ENCODE measurements at regions of chr9 and their contacts with region 1.

Region 1: DNA sequence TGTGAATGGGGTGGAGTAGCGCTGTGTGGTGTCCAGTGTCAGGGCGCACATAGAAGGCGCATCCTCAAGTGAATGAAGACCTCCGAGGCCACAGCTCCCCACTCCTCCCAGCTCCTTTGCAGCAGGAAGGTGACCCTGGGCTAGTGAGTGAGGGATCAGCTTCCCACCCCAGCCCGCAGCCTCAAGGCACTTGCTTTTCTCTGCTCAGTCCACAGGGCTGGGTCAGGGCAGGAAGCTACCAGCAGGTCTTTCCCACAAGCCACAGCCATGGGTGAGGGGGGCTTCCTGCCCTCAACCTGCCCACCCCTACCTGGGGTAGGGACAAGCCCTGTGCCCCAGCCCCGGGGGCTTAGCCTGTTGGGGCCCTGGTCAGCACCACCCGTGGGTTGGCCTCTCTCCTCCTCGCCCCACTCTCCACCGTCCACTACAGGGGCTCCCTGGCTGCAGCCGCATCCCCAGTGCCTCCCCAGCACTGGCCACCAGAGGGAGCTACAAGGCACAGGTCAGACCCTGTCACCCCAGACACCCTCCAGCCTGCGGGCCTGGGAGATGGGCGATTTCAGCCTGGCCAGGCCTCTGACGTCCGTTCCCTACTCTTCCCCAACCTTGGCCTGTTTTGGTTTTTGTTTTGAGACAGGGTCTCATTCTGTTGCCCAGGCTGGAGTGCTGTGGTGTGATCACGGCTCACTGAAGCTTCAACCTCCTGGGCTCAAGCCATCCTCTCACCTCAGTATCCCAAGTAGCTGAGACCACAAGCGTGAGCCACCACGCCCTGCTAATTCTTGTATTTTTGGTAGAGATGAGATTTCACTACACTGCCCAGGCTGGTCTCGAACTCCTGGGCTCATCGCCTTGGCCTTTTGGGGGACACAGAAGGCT is 1.3 kb upstream of the ABCA2 start:
- DNase-seq: peak; percentile 70
- H3K4me3 Mint-ChIP-seq: peak overlapping the region; percentile 67
- H3K27ac Mint-ChIP-seq: no peak overlapping the region
- H3K4me1 Mint-ChIP-seq: peaks cover 8% of the 10 kb centered on the region
- H3K27me3 Mint-ChIP-seq: no peaks in the 10 kb centered on the region
- CTCF ChIP-seq: peak; percentile 85

Region 2: DNA sequence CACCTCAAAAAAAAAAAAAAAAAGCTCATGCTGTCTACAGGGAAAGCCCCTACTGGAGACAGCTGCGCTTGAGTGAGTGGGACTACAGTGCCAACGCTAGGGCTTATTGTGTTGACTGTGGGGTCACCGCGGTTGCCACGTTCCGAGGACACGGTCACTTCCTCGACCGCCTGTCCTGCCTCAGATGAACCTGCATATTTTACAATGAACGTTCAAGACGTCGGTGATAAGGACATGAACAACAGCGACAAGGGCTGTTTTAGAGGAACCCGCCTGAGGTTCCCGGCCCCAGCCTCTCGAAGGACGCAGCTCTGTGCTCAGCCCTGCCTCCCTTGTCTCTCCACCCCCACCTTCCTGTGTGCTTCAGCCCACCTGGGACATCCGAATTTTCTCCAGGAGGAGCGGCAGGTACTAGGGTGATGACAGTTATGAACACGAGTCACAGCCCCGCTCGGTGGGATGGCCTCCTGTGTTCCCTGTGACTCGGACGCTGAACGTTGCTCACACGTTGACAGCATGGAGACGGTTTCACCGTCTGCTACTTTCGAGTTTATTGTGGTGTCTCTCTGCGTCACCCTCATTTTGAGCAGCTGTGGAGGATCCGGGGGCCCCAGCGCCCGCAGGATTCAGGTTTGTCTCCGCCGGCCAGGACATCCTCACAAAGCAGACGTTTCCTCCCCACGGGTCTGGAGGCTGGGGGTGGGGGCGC is 328.2 kb before region 1 on chr9:
- CTCF ChIA-PET with region 1: no interaction called
- POLR2A ChIA-PET with region 1: no interaction called
- intact Hi-C with region 1: no loop called
- DNase-seq: no peak
- H3K4me3 Mint-ChIP-seq: no peak overlapping the region
- H3K27ac Mint-ChIP-seq: no peak overlapping the region
- H3K4me1 Mint-ChIP-seq: peaks cover 11% of the 10 kb centered on the region
- H3K27me3 Mint-ChIP-seq: no peaks in the 10 kb centered on the region
- CTCF ChIP-seq: no peak

Region 3: DNA sequence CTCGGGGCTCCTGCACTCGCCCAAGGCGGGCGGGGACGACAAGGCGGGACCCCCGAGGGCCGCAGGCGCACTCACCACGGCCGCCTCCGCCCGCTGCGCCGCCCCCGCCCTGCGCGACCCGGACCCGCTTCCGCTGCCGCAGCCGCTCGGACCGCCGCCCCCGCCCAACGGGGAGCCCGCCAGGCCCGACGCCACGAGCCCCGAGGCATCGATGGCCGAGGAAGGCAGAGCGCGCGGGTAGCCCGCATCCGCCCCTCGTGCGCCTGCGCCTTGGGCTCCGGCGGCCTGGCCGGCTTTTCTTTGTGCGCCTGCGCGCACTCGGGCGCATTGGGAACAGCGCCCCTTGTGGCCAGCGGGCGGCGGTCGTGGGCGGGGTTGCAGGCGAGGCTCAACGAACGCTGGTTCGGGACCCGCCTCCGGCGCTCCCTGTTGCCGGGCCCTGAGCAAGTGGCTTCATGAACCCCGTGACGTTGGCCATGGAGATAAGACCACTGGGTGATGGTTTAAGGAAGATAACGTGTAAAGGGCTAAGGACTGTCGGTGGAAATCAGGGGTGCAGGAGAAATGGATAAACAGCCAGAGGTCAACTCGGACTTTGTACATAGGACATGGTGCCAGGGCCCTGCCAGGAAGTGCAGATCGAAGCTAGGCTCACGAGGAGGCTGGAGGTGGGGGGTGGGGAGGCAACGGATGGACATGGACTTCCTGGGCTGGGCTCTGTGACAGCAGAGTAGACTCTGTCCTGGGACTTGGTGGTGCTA is 84.6 kb before region 1 on chr9 and contains the starts of genes C8G and FBXW5:
- CTCF ChIA-PET with region 1: interaction called, 25 read pairs
- POLR2A ChIA-PET with region 1: interaction called, 3 read pairs
- intact Hi-C with region 1: no loop called
- DNase-seq: peak; percentile 93
- H3K4me3 Mint-ChIP-seq: peak within 1 kb of the TSS; percentile 70
- H3K27ac Mint-ChIP-seq: peak within 1 kb of the TSS; percentile 69
- H3K4me1 Mint-ChIP-seq: no peaks in the 10 kb centered on the region
- H3K27me3 Mint-ChIP-seq: no peaks in the 10 kb centered on the region
- CTCF ChIP-seq: peak; percentile 91
- total RNA-seq, gene C8G: 1.0 and 1.1 TPM in 2 replicates
- total RNA-seq, gene FBXW5: 88.8 and 100 TPM in 2 replicates

Region 4: DNA sequence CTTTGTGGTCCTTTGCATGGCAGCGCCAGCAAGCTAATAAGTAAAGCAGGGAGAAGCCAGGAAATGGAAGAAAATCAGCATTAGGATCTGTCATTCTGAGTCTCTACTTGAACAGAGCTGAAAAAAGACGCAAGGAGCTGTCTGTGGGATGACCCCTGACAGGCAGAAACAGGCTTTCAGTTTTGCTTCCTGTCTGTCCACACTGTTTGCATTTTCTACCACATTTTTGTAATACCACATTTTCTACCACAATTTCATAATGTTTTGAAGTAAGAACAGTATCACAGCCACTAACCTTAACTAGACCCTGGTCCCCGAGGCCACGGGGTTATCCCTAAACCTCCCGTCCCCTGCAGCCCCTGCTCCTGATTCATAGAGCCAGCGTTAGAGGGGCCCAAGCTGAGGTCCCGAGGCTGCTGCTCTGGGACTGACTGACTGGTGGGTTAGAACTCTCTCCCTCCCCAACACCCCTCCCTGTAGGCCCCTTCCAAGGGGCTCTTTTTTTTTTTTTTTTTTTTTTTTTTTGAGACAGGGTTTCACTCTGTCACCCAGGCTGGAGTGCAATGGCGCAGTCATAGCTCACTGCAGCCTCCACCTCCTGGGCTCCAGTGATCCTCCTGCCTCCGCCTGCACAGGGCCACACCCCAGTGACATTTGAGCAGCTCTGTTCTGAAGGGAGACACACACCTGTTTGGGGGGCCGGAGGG is 29.0 kb before region 1 on chr9:
- CTCF ChIA-PET with region 1: interaction called, 18 read pairs
- POLR2A ChIA-PET with region 1: interaction called, 4 read pairs
- intact Hi-C with region 1: no loop called
- DNase-seq: no peak
- H3K4me3 Mint-ChIP-seq: no peak overlapping the region
- H3K27ac Mint-ChIP-seq: no peak overlapping the region
- H3K4me1 Mint-ChIP-seq: peaks cover 4% of the 10 kb centered on the region
- H3K27me3 Mint-ChIP-seq: no peaks in the 10 kb centered on the region
- CTCF ChIP-seq: no peak

Region 5: GRCh38 chr9:137017791-137018497 is 11.4 kb before region 1 on chr9:
- CTCF ChIA-PET with region 1: interaction called, 14 read pairs
- POLR2A ChIA-PET with region 1: no interaction called
- intact Hi-C with region 1: no loop called
- DNase-seq: no peak
- H3K4me3 Mint-ChIP-seq: no peak overlapping the region
- H3K27ac Mint-ChIP-seq: no peak overlapping the region
- H3K4me1 Mint-ChIP-seq: no peaks in the 10 kb centered on the region
- H3K27me3 Mint-ChIP-seq: no peaks in the 10 kb centered on the region
- CTCF ChIP-seq: no peak

Region 6: GRCh38 chr9:137046098-137046787 is 16.9 kb after region 1 on chr9 and contains the start of gene NPDC1:
- CTCF ChIA-PET with region 1: interaction called, 15 read pairs
- POLR2A ChIA-PET with region 1: interaction called, 4 read pairs
- intact Hi-C with region 1: no loop called
- DNase-seq: peak; percentile 82
- H3K4me3 Mint-ChIP-seq: peak within 1 kb of the TSS; percentile 74
- H3K27ac Mint-ChIP-seq: no peak within 1 kb of the TSS
- H3K4me1 Mint-ChIP-seq: no peaks in the 10 kb centered on the region
- H3K27me3 Mint-ChIP-seq: no peaks in the 10 kb centered on the region
- CTCF ChIP-seq: peak; percentile 87
- total RNA-seq, gene NPDC1: 161 and 171 TPM in 2 replicates

Region 7: DNA sequence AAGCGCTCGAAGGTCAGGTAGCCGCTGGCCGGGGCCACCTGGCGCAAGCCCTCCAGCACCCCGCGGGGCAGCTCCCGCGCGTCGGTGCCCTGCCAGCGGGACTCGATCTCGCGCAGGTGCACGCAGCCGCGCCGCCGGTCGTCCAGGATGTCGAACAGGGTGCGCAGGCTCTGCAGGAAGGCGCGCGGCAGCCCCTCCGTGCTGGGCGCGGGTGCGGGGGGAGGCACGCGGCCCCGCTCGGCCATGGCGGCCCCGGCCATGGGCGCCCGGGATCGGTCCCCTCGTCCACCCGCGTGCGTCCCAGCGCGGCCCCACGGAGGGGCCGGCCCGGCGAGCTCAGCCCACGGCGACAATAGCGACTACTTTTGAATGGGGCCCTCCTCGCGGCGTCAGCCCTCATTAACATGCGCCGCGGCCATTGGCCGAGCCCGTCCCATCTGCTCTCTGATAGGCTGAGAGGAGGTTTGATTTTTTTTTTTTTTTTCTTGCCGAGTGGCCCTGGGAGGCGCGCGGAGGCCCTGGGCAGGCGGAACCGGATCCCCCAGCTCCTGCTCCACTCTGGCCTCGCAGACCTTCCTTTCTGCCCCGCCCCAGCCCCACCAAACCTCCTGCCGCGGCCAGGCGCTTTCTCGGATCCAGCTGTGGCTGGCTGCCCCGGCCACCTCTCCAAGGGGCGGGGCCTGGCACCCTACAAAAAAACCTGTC is 41.1 kb after region 1 on chr9 and contains the start of gene SAPCD2:
- CTCF ChIA-PET with region 1: interaction called, 85 read pairs
- POLR2A ChIA-PET with region 1: interaction called, 4 read pairs
- intact Hi-C with region 1: no loop called
- DNase-seq: peak; percentile 90
- H3K4me3 Mint-ChIP-seq: peak within 1 kb of the TSS; percentile 72
- H3K27ac Mint-ChIP-seq: no peak within 1 kb of the TSS
- H3K4me1 Mint-ChIP-seq: peaks cover 11% of the 10 kb centered on the region
- H3K27me3 Mint-ChIP-seq: no peaks in the 10 kb centered on the region
- CTCF ChIP-seq: no peak
- total RNA-seq, gene SAPCD2: 5.7 and 15.7 TPM in 2 replicates

Region 8: GRCh38 chr9:137168905-137169856 is 139.9 kb after region 1 on chr9:
- CTCF ChIA-PET with region 1: no interaction called
- POLR2A ChIA-PET with region 1: no interaction called
- intact Hi-C with region 1: no loop called
- DNase-seq: peak; percentile 44
- H3K4me3 Mint-ChIP-seq: peak overlapping the region; percentile 53
- H3K27ac Mint-ChIP-seq: no peak overlapping the region
- H3K4me1 Mint-ChIP-seq: no peaks in the 10 kb centered on the region
- H3K27me3 Mint-ChIP-seq: peaks cover 13% of the 10 kb centered on the region
- CTCF ChIP-seq: no peak